Endothelial cell of umbilical vein (primary cell): ENCODE measurements at regions of chr1 and their contacts with region 1.

Region 1: DNA sequence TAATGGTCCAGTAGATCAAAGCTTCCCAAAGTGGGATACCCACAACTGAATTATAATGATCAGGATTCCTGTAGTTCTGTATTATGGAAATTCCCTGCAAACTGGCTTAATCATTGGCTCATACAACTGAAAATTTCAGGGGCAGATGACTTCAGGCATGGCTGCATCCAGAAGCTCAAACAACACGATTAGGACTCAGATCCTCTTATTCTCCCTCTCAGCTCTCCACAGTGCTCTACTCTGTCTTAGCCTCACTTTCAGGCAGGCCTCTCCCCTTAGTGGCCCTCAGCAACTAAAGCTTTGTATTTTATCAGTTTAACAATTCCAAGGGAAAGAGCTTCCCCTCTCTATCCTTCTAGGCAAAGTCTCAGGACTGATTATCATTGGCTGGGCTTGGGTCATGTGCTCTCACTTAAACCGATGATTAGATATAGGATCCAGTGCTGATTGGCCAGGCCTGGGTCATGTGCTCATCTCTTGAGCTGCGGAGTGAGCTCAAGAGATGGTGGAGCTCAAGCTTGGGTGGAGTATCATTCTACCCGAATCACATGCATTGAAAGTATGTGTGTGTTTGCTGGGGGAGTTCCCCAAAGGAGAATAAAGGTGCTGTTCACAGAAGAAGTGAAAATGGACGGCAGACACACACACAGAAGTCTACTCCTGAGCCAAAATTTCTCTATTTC is 57.9 kb upstream of the RUNX3 start:
- DNase-seq: no peak
- H3K4me3 ChIP-seq: no peak overlapping the region
- H3K27ac ChIP-seq: no peak overlapping the region
- H3K4me1 ChIP-seq: no peaks in the 10 kb centered on the region
- H3K27me3 ChIP-seq: peaks cover 0 to 3% of the 10 kb centered on the region in 2 experiments
- CTCF ChIP-seq: no peak
- POLR2A ChIP-seq: no peak

Region 2: GRCh38 chr1:25042331-25043227 is 54.6 kb after region 1 on chr1:
- CTCF ChIA-PET with region 1: no interaction called
- POLR2A ChIA-PET with region 1: no interaction called
- dilution Hi-C with region 1: loop called (anchors 10 kb)
- intact Hi-C with region 1: no loop called
- DNase-seq: no peak
- H3K4me3 ChIP-seq: no peak overlapping the region
- H3K27ac ChIP-seq: no peak overlapping the region
- H3K4me1 ChIP-seq: no peaks in the 10 kb centered on the region
- H3K27me3 ChIP-seq: no peaks in the 10 kb centered on the region
- CTCF ChIP-seq: no peak
- POLR2A ChIP-seq: no peak